ENCODE measurements at regions of chr2 and their contacts with region 1.

Region 1: DNA sequence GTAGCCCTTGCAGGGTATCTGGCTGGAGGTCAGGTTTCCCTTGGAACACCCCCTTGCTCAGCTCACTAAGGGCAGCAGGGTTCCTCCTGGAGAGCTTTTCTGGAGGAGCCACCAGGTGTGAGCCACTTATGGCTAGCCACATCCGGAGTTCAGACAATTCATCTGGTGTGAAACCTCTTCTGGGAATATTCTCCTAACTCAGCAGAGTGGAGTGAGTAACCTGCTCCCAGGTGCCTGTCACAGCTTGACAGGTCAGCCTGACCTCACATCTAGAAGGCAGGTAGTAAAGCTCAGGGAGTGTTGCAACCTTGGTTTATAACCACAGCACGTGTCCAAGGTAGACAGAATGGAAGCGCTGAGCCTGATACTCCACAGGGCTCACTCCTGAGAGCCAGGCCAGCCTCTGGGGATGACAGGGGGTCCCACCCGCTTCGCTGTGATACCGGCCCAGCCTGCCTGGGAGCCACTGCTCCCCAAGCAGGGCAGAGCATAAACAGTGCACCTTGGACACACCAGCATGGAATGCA is 62.6 kb upstream of the TGFA start:
- DNase-seq: peak; percentile 67 to 96
- H3K4me3 ChIP-seq: no peak overlapping the region
- H3K27ac ChIP-seq: peak overlapping the region; percentile 33; the same call in 1 of the 2 replicates
- H3K4me1 ChIP-seq: peaks cover 24% of the 10 kb centered on the region
- H3K27me3 ChIP-seq: no peaks in the 10 kb centered on the region
- CTCF ChIP-seq: no peak

Region 2: GRCh38 chr2:70328921-70329561 is 287.2 kb before region 1 on chr2:
- CTCF ChIA-PET with region 1: interaction called, 4 read pairs
- POLR2A ChIA-PET with region 1: interaction called, 3 read pairs
- intact Hi-C with region 1: loop called (anchors 2 kb)
- DNase-seq: peak; percentile 93 to 97
- H3K4me3 ChIP-seq: peak overlapping the region; percentile 8; the same call in 1 of the 2 replicates
- H3K27ac ChIP-seq: peak overlapping the region; percentile 81
- H3K4me1 ChIP-seq: peaks cover 29% of the 10 kb centered on the region
- H3K27me3 ChIP-seq: no peaks in the 10 kb centered on the region
- CTCF ChIP-seq: no peak

Region 3: GRCh38 chr2:70340921-70341765 is 275.1 kb before region 1 on chr2:
- CTCF ChIA-PET with region 1: interaction called, 4 read pairs
- POLR2A ChIA-PET with region 1: no interaction called
- intact Hi-C with region 1: loop called (anchors 1 kb)
- DNase-seq: peak; percentile 65 to 70
- H3K4me3 ChIP-seq: no peak overlapping the region
- H3K27ac ChIP-seq: no peak overlapping the region
- H3K4me1 ChIP-seq: peaks cover 17% of the 10 kb centered on the region
- H3K27me3 ChIP-seq: no peaks in the 10 kb centered on the region
- CTCF ChIP-seq: peak; percentile 90

Region 4: GRCh38 chr2:70472221-70472890 is 143.9 kb before region 1 on chr2:
- CTCF ChIA-PET with region 1: no interaction called
- POLR2A ChIA-PET with region 1: no interaction called
- intact Hi-C with region 1: no loop called
- DNase-seq: no peak
- H3K4me3 ChIP-seq: no peak overlapping the region
- H3K27ac ChIP-seq: no peak overlapping the region
- H3K4me1 ChIP-seq: peaks cover 17% of the 10 kb centered on the region
- H3K27me3 ChIP-seq: no peaks in the 10 kb centered on the region
- CTCF ChIP-seq: no peak

Region 5: DNA sequence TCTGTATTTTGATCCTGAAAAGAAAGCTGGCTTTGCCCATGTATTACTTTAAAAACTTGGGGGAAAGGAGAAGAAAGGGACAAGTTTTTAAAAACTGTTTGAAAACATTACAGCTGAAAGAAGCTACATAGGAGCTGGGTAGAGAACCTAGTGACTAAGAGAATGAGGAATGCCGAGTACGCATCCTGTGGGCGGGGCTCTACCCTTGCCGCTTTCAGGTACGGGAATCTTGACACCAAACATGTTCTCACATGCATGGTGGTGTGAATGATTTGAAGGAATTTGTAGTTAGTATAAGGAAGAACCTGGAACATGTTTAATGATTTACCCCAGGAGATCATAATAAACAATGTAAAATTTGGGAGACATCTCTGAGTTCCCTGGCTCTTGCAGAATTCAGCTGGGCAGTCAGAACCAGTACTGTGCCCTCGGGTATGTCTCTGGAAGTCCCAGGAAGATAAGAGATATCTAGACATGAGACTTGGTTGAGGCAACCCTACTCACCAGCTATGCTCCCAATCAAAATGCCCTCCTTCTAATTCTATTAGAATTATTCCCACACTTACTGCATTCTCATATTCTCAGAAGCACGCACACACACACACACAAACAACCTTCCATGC is 46.1 kb before region 1 on chr2:
- CTCF ChIA-PET with region 1: no interaction called
- POLR2A ChIA-PET with region 1: no interaction called
- intact Hi-C with region 1: loop called (anchors 2 kb)
- DNase-seq: peak; percentile 63 to 69
- H3K4me3 ChIP-seq: no peak overlapping the region
- H3K27ac ChIP-seq: no peak overlapping the region
- H3K4me1 ChIP-seq: 0 out of 2 replicates have a peak, but pooled peaks cover 5% of the 10 kb centered on the region
- H3K27me3 ChIP-seq: no peaks in the 10 kb centered on the region
- CTCF ChIP-seq: no peak

Measured in PC-9 (cell line).